ENCODE measurements at regions of chr17 and their contacts with region 1.

Region 1: DNA sequence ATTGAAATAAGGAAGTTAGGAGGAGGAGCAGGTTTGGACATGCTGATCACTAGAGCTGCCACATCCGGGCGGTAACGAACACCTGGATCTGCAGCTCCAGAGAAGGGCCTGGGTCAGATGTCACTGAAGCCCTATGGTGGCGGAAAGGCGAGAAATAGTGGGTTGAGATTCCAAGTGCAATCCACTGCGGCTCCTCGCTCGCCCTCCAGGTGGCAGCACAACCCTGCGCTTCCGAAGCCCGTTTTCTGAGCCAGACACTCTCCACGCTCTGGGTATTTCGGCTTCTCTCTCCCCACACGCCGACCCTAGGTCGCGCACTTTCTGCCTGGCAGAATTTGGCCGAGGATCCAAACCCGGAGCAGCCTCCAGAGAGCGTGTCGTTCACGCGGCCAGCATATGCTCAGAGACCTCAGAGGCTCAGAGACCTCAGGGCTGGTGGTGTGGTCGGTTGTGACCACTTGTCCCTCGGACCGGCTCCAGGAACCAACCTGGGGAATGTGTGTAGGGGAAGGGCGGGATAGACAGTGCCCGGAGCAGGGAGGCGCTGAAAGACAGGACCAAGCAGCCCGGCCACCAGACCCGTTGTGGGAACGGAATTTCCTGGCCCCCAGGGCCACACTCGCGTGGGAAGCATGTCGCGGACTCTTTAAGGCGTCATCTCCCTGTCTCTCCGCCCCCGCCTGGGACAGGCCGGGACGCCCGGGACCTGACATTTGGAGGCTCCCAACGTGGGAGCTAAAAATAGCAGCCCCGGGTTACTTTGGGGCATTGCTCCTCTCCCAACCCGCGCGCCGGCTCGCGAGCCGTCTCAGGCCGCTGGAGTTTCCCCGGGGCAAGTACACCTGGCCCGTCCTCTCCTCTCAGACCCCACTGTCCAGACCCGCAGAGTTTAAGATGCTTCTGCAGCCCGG is 744 bp upstream of the SLC2A4 start:
- DNase-seq: peak; percentile 87
- ATAC-seq: peak; percentile 68

Region 2: DNA sequence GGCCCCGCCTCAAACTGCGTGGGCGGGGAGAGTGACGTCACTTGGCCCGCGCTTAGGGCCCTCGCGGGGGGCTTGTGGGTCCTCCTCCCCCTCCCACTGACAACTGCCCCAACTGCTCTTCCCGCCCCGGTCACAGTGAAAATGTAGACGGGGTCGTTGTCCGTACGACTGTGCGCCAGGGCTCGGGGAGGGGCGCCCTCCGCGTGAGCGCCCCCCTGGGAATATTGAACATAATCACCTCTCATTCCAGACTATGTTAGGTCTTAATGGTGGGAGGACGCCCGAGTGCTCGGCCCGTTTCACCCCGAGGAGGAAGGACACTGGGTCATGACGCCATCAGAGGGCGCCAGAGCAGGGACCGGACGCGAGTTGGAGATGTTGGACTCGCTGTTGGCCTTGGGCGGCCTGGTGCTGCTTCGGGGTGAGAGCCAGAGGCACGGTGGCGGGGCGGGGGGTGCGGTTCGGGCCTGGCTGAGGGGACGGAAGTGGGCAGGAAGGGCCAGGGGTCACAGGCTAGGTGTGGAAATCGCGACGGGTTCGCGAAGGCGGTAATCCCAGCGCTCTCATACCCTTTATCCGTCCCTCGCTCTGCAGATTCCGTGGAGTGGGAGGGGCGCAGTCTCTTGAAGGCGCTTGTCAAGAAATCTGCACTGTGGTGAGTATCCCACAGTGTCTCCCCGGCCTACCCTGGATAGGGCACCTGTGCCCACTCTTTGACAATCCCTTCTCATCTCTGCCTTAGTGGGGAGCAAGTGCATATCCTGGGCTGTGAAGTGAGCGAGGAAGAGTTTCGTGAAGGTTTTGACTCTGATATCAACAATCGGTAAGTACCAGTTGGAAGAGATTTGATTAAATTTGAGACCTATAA is 28.4 kb before region 1 on chr17 and contains the start of gene ELP5:
- intact Hi-C with region 1: loop called (anchors 1 kb)
- DNase-seq: peak; percentile 97
- ATAC-seq: peak; percentile 78
- total RNA-seq, gene ELP5: 72.7 TPM

Region 3: DNA sequence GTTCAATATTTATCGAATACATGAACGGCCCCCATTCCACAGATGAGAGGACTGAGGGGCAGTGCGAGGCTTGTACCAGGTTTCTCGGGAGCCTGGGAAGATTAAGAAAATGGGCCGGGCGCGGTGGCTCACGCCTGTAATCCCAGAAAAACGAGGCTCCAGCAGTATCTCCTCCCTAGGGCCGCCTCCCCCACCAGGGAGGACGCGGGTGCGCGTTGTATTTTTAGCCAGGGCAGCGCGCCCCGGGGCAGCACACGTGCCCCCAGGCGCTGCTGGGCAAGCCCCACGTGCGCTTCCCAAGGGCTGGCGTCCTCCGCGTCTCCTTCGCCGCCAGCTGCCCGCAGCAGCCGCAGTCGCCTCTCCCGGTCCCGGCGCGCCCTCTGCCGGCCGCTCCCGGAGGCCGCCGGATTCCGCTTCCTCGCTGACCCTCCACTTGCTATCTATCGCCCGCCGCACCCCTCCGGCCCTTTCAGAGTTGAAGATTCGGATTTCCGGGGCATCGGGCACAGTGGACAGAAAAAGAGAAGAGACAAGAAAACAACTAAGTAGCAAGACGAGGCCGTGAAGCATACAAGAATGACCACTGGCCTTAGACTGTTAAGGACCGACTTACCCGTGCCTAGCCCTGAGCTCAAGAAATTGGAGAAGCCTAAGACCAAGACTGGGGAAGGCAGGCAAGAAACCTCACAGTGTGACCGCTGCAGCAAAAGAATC is 15.6 kb after region 1 on chr17:
- intact Hi-C with region 1: loop called (anchors 1 kb)
- DNase-seq: peak; percentile 92
- ATAC-seq: peak; percentile 86

Measured in Right ventricle myocardium inferior (tissue), 1 donor.